ENCODE measurements at regions of chr21 and their contacts with region 1.

Region 1: GRCh38 chr21:17512253-17513213 is at the start of gene CXADR:
- DNase-seq: peak; percentile 85
- H3K4me3 ChIP-seq: peak within 1 kb of the TSS; percentile 74 to 84 (median 80)
- H3K27ac ChIP-seq: peak within 1 kb of the TSS; percentile 62
- H3K4me1 ChIP-seq: peaks cover 19% of the 10 kb centered on the region
- H3K27me3 ChIP-seq: peaks cover 6% of the 10 kb centered on the region
- CTCF ChIP-seq: peak; percentile 23 to 55
- total RNA-seq, gene CXADR: 8.6 to 48.0 TPM

Region 2: DNA sequence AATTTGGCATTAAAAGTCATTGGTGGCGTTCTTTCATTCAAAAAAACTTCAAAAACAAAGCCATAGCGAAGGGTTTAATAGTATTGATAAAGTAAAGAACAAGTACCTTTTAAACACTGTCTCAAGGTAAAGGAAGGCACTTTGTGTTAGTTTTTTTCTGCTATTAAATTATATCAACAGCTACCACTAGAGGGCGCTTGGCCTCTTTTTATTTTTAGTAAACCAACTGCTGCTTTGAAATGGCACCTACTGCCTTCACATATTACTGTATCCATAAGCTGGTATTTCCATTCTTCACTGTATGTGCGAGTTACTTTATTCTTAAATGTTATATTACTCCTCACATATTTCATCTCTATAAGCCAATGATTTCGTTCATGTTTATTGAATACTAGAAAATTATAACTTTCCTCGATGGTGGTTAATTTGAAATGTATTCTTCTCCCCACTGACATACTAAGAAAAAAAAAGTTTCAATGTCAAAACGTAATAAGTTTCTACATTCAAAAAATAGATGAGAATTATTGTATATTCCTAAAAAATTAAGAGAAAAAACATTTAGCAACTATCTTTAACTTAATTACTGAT is 125.4 kb before region 1 on chr21:
- CTCF ChIA-PET with region 1: no interaction called
- dilution Hi-C with region 1: no loop called
- in situ Hi-C with region 1: no loop called
- intact Hi-C with region 1: loop called (anchors 2 kb)
- DNase-seq: peak; percentile 47
- H3K4me3 ChIP-seq: no peak overlapping the region
- H3K27ac ChIP-seq: no peak overlapping the region
- H3K4me1 ChIP-seq: no peaks in the 10 kb centered on the region
- H3K27me3 ChIP-seq: no peaks in the 10 kb centered on the region
- CTCF ChIP-seq: peak; percentile 57 to 63

Region 3: DNA sequence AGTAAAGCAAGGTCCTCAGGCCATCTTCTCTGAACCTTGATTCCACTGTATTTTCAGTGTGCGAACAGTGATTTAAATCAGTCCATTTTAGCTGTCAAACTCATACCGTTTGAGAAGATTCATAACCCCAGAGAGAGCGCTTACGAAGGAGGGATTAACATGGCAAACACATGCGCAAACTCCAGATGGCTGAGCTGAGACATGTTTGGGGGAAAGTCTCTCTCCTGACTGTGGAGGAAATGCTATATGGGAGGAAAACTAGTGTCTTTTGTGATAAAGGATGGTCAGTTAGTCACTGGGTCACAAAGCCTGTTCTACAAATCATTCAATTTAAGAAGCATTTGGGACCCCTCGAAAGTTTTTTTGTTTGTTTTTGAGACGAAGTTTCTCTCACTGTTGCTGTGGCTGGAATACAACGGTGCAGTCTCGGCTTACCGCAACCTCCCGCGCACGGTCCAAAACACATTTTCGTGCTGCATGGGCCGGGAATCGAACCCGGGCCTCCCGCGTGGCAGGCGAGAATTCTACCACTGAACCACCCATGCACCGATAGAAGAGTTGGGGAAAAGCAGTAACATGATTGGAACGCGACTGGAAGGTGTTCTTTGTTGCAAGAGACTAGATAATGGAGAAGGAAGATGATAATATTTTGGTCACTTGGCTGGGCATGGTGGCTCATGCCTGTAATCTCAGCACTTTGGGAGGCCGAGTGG is 58.1 kb before region 1 on chr21:
- CTCF ChIA-PET with region 1: no interaction called
- dilution Hi-C with region 1: no loop called
- in situ Hi-C with region 1: no loop called
- intact Hi-C with region 1: loop called (anchors 2 kb)
- DNase-seq: peak; percentile 88
- H3K4me3 ChIP-seq: no peak overlapping the region
- H3K27ac ChIP-seq: no peak overlapping the region
- H3K4me1 ChIP-seq: peaks cover 3% of the 10 kb centered on the region
- H3K27me3 ChIP-seq: no peaks in the 10 kb centered on the region
- CTCF ChIP-seq: no peak

Region 4: GRCh38 chr21:17491716-17492414 is 20.7 kb before region 1 on chr21:
- CTCF ChIA-PET with region 1: no interaction called
- dilution Hi-C with region 1: no loop called
- in situ Hi-C with region 1: no loop called
- intact Hi-C with region 1: loop called (anchors 2 kb)
- DNase-seq: peak; percentile 93
- H3K4me3 ChIP-seq: peak overlapping the region in 1 of 3 experiments; percentile 2
- H3K27ac ChIP-seq: peak overlapping the region; percentile 72
- H3K4me1 ChIP-seq: peaks cover 24% of the 10 kb centered on the region
- H3K27me3 ChIP-seq: peaks cover 19% of the 10 kb centered on the region
- CTCF ChIP-seq: no peak

Region 5: GRCh38 chr21:17585875-17586450 is 73.4 kb after region 1 on chr21:
- CTCF ChIA-PET with region 1: no interaction called
- dilution Hi-C with region 1: no loop called
- in situ Hi-C with region 1: no loop called
- intact Hi-C with region 1: loop called (anchors 5 kb)
- DNase-seq: peak; percentile 24
- H3K4me3 ChIP-seq: no peak overlapping the region
- H3K27ac ChIP-seq: no peak overlapping the region
- H3K4me1 ChIP-seq: no peaks in the 10 kb centered on the region
- H3K27me3 ChIP-seq: no peaks in the 10 kb centered on the region
- CTCF ChIP-seq: peak; percentile 50 to 62

Region 6: GRCh38 chr21:17631195-17631594 is 118.7 kb after region 1 on chr21:
- CTCF ChIA-PET with region 1: no interaction called
- dilution Hi-C with region 1: no loop called
- in situ Hi-C with region 1: no loop called
- intact Hi-C with region 1: no loop called
- DNase-seq: no peak
- H3K4me3 ChIP-seq: no peak overlapping the region
- H3K27ac ChIP-seq: no peak overlapping the region
- H3K4me1 ChIP-seq: no peaks in the 10 kb centered on the region
- H3K27me3 ChIP-seq: no peaks in the 10 kb centered on the region
- CTCF ChIP-seq: no peak